GM12878 (cell line): ENCODE measurements at regions of chr20 and their contacts with region 1.

Region 1: DNA sequence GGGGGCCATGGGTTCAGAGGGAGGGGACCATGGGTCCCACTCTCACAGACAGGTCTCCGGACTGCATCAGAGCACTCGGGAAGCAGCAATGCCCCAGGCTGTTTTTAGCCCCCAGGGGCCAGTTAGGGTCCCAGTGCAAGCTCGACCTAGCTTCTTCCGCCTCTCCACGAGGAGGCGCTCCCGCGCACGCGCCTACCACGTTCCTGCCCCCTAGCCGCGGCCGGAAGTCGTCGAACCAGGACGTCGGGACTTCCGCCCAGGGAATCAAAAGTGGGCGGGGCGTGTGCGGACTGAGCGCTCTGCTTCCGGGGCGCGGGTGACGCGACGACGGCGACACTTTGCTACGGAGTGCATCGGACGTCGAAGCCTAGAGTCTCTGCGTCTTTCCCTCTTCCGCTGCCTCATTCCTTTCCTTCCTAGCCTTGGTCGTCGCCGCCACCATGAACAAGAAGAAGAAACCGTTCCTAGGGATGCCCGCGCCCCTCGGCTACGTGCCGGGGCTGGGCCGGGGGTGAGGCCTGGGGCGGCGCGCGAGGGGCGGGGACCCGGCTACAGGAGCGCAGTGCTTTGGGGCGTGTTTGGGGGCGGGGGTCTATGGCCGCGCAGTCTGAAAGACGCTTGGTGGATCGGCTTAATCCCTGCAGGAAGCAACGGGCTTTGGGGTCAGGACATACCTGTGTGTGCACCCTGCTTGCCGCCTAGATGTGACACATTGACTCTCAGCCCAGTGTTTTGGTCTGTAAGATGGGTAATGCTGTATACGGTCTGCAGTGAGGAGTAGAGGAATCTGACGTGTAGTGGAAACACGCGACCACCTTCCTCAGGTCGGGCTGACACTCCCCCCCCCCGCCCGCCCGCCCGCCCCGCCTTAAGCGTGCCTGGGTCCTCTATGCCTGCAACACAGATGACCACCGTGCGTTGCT is at the start of gene PRPF6:
- DNase-seq: peak; percentile 83
- ATAC-seq: peak; percentile 68
- H3K4me3 ChIP-seq: peak within 1 kb of the TSS; percentile 96
- H3K27ac ChIP-seq: peak within 1 kb of the TSS; percentile 92
- H3K4me1 ChIP-seq: peaks cover 23% of the 10 kb centered on the region
- H3K27me3 ChIP-seq: no peaks in the 10 kb centered on the region
- CTCF ChIP-seq: peak; percentile 83 to 97 (median 88)
- EP300 ChIP-seq: no peak
- POLR2A ChIP-seq: peak; percentile 89
- RAD21 ChIP-seq: peak; percentile 57
- polyA plus RNA-seq, gene PRPF6: 5.0 to 10.7 TPM

Region 2: GRCh38 chr20:63942250-63942959 is 38.7 kb before region 1 on chr20:
- CTCF ChIA-PET with region 1: no interaction called
- POLR2A ChIA-PET with region 1: no interaction called
- RAD21 ChIA-PET with region 1: no interaction called
- SMC1A ChIA-PET with region 1: no interaction called
- in situ Hi-C with region 1: no loop called
- intact Hi-C with region 1: no loop called
- DNase-seq: no peak
- ATAC-seq: no peak
- H3K4me3 ChIP-seq: no peak overlapping the region
- H3K27ac ChIP-seq: no peak overlapping the region
- H3K4me1 ChIP-seq: peaks cover 2% of the 10 kb centered on the region
- H3K27me3 ChIP-seq: no peaks in the 10 kb centered on the region
- CTCF ChIP-seq: no peak
- EP300 ChIP-seq: no peak
- POLR2A ChIP-seq: 0 out of 2 replicates have a peak, but pooled peaks have one; percentile 6
- RAD21 ChIP-seq: no peak

Region 3: GRCh38 chr20:64010711-64011237 is 29.7 kb after region 1 on chr20:
- CTCF ChIA-PET with region 1: interaction called, 6 read pairs
- POLR2A ChIA-PET with region 1: interaction called, 12 read pairs
- RAD21 ChIA-PET with region 1: interaction called, 5 read pairs
- SMC1A ChIA-PET with region 1: interaction called, 15 read pairs
- in situ Hi-C with region 1: no loop called
- intact Hi-C with region 1: loop called (anchors 1 kb)
- DNase-seq: peak; percentile 31
- ATAC-seq: peak; percentile 76
- H3K4me3 ChIP-seq: no peak overlapping the region
- H3K27ac ChIP-seq: peak overlapping the region; percentile 94
- H3K4me1 ChIP-seq: peaks cover 27% of the 10 kb centered on the region
- H3K27me3 ChIP-seq: no peaks in the 10 kb centered on the region
- CTCF ChIP-seq: no peak
- EP300 ChIP-seq: 0 out of 4 replicates have a peak, but pooled peaks of 1 of the 2 experiments have one; percentile 42
- POLR2A ChIP-seq: no peak
- RAD21 ChIP-seq: no peak

Region 4: DNA sequence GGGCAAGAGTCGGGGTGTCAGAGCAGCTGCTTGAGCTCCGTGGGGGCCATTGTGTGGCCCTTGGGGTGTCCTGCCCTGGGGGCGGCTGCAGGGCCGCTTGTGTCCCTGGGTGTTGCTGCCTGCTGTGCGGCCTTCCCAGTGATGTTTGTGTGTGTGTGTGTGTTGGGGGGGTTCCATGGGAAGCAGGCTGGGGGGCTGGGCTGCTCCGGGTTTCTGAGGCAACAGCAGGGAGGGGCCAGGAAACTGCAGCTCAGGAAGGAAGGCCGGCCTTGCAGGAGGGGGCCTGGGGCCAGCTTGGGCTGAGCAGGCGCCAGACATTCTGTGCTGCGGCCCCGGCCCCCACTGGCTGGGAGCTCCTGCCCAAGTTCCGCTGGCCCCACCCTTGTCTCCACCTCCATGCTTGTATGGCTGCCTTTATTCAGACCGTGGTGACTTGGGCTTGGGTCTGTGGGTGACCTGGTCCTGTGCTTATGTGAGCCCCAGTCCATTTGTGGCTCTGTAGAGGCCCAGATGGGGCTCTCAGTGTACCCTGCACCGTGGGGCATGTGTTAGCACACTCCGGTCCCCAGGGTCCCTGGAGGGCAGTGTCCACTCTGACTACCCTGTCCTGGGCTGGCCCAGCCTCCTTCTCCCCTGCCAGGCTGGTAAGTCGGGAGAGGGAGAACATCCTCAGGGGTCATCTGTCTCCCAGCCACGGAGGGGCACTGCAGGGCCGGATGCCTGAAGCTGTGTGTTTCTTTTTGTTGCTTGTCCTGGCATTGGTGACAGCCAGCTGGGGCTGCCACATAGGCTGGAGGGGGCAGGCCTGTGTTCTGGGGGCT is 73.0 kb after region 1 on chr20:
- CTCF ChIA-PET with region 1: interaction called, 24 read pairs
- POLR2A ChIA-PET with region 1: interaction called, 4 read pairs
- RAD21 ChIA-PET with region 1: interaction called, 11 read pairs
- SMC1A ChIA-PET with region 1: interaction called, 4 read pairs
- in situ Hi-C with region 1: no loop called
- intact Hi-C with region 1: loop called (anchors 5 kb)
- DNase-seq: no peak
- ATAC-seq: peak; percentile 41
- H3K4me3 ChIP-seq: no peak overlapping the region
- H3K27ac ChIP-seq: no peak overlapping the region
- H3K4me1 ChIP-seq: peaks cover 48% of the 10 kb centered on the region
- H3K27me3 ChIP-seq: peaks cover 3 to 8% of the 10 kb centered on the region in 2 experiments; a peak in 3 of 4 replicates
- CTCF ChIP-seq: peak; percentile 44 to 54 (median 47); a peak in 4 of 6 replicates
- EP300 ChIP-seq: no peak
- POLR2A ChIP-seq: no peak
- RAD21 ChIP-seq: peak; percentile 49; the same call in 1 of the 2 replicates

Region 5: DNA sequence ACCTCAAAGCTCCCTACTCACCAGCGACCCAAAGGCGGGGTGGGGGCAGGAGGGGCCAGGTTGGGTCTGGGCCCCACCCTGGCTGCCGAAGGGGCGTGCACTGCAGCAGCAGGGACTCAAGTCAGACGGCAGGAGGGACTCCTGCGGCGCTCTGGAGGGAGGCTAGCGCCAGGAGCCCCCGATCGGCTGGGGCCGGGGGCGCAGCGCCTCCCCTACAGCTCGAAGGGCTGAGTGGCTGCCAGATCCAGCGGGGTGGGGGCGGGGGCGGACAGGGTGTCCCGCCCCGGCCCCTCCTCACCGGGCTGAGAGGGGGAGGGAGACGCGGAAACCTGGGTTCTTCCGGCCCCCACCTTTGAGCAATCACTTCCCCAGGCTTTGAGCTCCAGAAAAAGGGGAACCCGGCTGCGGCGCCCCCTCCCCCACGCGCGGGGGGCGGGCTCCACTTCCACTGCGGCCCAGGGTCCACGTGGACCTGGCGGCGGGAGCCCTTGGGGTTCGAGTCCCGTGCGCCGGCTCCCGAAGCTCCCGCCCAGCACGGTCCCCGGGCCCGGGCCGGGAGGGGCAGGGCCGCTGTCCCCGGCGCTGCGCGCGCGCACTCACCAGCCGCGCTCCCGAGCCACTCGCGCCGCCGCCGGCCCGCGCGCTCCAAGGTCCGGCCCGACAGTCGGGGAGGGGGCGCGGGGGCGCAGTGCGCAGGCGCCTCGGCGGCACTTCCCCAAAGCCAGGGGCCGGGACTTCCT is 98.4 kb after region 1 on chr20 and contains the start of gene RGS19:
- CTCF ChIA-PET with region 1: interaction called, 3 read pairs
- POLR2A ChIA-PET with region 1: interaction called, 14 read pairs
- RAD21 ChIA-PET with region 1: interaction called, 7 read pairs
- SMC1A ChIA-PET with region 1: no interaction called
- in situ Hi-C with region 1: no loop called
- intact Hi-C with region 1: no loop called
- DNase-seq: no peak
- ATAC-seq: peak; percentile 45
- H3K4me3 ChIP-seq: peak within 1 kb of the TSS; percentile 83
- H3K27ac ChIP-seq: peak within 1 kb of the TSS; percentile 85
- H3K4me1 ChIP-seq: peaks cover 26% of the 10 kb centered on the region
- H3K27me3 ChIP-seq: peaks cover 2 to 4% of the 10 kb centered on the region in 2 experiments; a peak in 2 of 4 replicates
- CTCF ChIP-seq: no peak
- EP300 ChIP-seq: no peak
- POLR2A ChIP-seq: peak; percentile 67
- RAD21 ChIP-seq: no peak
- polyA plus RNA-seq, gene RGS19: 0.82 to 3.3 TPM